ENCODE measurements at regions of chr12 and their contacts with region 1.

Region 1: DNA sequence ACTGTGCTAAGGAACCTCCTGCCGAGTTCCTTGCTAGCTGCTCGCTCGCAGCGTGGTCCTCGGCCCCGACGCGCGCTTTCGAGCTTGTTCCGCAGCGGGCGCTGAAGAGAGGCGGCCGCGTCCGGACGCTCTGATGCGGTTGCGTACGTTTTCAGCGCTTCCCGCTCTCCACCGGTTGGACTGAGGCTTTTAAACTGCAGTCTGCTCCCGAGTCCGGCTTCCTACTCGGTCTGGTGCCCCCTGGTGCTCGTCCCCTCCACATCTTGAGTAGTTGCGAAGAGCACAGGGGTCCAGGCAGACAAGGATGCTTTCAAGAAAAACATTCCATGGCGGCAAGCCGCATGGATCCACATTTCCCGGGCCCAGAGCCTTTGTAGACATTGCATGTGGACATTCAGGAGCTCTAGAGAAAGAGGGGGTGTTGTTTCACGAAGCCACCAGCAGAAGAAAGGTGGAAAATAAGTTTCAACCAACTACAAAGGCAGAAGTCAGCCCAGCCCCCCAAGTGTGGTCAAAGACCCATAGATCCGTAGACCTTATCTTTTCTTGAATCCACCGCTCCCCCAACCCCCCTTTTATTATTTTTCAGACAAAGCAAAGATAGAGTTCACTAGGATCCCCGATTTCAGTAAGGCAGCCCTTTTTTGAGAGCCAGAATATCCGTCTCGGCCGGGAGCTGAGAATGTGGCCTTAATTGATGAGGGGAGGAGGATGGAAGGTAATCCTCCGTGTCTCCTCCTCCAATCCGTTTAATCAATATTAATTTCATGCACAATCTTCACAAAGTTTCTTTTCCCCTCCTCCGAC is 984 bp upstream of the WNK1 start:
- DNase-seq: peak; percentile 98
- H3K4me3 ChIP-seq: peak overlapping the region; percentile 92
- H3K27ac ChIP-seq: peak overlapping the region; percentile 73
- H3K4me1 ChIP-seq: peaks cover 19% of the 10 kb centered on the region
- H3K27me3 ChIP-seq: no peaks in the 10 kb centered on the region
- CTCF ChIP-seq: peak; percentile 80

Region 2: DNA sequence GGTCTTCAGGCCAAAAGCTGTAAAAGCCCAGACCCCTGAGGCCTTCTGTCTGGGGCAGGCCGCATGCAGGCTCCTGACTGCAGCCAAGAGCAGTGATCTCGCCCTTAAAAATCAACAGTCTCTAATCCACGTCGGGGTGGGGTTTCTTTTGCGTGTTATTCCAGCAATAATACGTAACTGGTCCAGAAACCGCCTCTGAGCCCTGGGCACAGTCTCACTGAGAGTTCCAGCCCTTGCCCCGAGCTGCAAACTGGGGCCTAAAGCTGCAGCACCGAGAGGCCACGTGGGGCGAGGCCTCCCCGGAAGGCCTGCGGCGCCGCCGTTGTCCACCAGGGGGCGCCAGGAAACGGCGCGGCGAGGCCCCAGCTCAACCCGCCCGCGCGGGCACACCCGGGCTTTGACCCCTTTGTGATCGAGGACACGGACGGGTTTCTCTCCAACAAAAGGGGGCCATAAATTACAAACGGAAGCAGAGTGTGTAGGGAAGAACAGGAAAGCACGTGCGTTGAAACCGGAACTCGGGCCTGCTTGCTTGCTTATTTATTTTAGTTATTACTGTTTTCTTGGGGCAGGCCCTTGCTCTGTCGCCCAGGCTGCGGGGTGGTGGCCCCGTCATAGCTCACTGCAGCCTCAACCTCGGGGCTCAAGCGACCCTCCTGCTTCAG is 175.3 kb before region 1 on chr12:
- CTCF ChIA-PET with region 1: interaction called, 8 read pairs
- POLR2A ChIA-PET with region 1: no interaction called
- intact Hi-C with region 1: loop called (anchors 2 kb)
- DNase-seq: peak; percentile 89
- H3K4me3 ChIP-seq: no peak overlapping the region
- H3K27ac ChIP-seq: no peak overlapping the region
- H3K4me1 ChIP-seq: peaks cover 17% of the 10 kb centered on the region
- H3K27me3 ChIP-seq: no peaks in the 10 kb centered on the region
- CTCF ChIP-seq: peak; percentile 99

Region 3: GRCh38 chr12:614411-614970 is 136.9 kb before region 1 on chr12:
- CTCF ChIA-PET with region 1: interaction called, 17 read pairs
- POLR2A ChIA-PET with region 1: no interaction called
- intact Hi-C with region 1: no loop called
- DNase-seq: peak; percentile 46
- H3K4me3 ChIP-seq: no peak overlapping the region
- H3K27ac ChIP-seq: no peak overlapping the region
- H3K4me1 ChIP-seq: no peaks in the 10 kb centered on the region
- H3K27me3 ChIP-seq: no peaks in the 10 kb centered on the region
- CTCF ChIP-seq: peak; percentile 58